ENCODE measurements at regions of chr15 and their contacts with region 1.

Region 1: DNA sequence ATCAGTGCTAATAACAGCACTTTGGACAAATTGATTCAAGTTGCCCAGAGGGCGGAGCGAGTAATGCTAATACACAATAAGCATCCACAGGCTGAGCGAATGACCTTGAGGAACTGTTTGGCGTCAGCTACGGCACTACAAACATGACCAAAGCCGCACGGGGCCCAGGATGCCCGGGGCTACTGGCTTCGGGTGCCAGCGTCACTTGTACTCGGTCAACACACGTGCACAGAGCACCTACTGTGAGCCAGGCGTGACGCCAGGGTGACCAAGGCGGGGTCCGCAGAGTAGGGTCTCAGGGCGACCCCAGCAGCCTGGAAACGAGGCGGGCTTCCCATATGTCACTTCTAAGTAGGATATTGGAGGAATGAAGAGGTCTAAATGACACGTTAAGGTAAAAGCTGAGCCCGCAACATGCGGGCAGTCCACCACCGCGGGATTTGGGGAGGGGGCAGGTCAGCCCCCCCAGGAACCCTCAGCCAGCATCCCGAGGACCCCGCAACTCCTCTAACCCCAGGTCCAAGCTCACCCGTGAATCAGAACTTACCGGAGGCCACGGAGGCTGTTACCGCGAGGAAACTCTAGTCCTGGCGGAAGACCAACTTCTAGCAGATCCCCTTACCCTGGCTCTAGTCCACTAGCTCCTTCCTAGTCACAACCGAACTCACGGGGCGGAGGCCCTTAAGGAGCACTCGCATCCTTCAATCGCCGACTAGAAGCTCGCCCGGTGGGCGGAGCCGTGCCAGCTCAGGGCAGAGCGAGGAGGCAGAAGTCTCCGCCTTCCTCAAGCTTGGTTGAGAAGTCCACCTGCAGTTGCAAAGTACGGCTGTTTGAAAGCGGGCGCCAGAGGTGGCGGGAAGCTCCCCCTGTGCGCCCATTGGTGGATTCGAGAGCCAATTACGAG is at the start of gene CEP152:
- DNase-seq: peak; percentile 99
- ATAC-seq: peak; percentile 95
- H3K4me3 Mint-ChIP-seq: peak within 1 kb of the TSS; percentile 97
- H3K27ac Mint-ChIP-seq: peak within 1 kb of the TSS; percentile 98
- H3K4me1 Mint-ChIP-seq: peaks cover 34% of the 10 kb centered on the region
- H3K27me3 Mint-ChIP-seq: peaks cover 10% of the 10 kb centered on the region
- CTCF ChIP-seq: no peak
- total RNA-seq, gene CEP152: 12.8 to 16.7 TPM (median 13.0 TPM) in 3 replicates

Region 2: GRCh38 chr15:48823237-48823636 is 12.6 kb after region 1 on chr15:
- CTCF ChIA-PET with region 1: interaction called, 13 read pairs
- POLR2A ChIA-PET with region 1: interaction called, 6 read pairs
- DNase-seq: peak; percentile 17
- ATAC-seq: peak; percentile 99
- H3K4me3 Mint-ChIP-seq: no peak overlapping the region
- H3K27ac Mint-ChIP-seq: peak overlapping the region; percentile 28; the same call in 1 of the 2 replicates
- H3K4me1 Mint-ChIP-seq: peaks cover 12% of the 10 kb centered on the region
- H3K27me3 Mint-ChIP-seq: no peaks in the 10 kb centered on the region
- CTCF ChIP-seq: no peak

Measured in WTC11 (cell line).